Activated T-helper 1 cell treated with anti-CD3 and anti-CD28 coated beads, Interleukin-12 subunit alpha, Interleukin-12 subunit beta, Interleukin-2, Interleukin-4 antibody, amounts not matched to agents 30 ng/mL and 10 ng/mL and 1 ng/mL, durations not matched to agents 14 hours and 24 hours and 36 hours (primary cell): ENCODE measurements at regions of chr1 and their contacts with region 1.

Region 1: DNA sequence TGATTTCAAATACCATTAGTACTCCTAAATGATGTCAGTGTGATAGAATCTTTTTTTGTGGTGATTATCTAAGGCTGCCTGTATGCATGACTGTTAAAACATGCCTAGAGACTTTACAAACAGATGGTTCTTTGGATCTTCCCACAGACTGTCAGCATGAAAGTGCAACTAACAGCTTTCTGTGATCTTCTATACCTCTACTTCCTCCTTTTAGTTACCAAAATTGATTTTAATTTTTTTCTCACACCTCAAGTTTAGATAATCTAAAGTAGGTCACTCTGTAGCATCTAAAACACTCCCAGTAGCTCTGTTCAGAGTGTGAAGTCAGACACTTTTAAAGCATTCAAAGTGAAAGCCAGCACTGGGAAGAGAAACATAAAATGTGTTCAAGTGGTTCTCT is 534.5 kb downstream of the PTPRC start:
- DNase-seq: peak; percentile 35
- H3K4me3 Mint-ChIP-seq: peak overlapping the region; percentile 31
- H3K27ac Mint-ChIP-seq: peak overlapping the region; percentile 73
- H3K4me1 Mint-ChIP-seq: peaks cover 60% of the 10 kb centered on the region
- H3K27me3 Mint-ChIP-seq: peaks cover 2% of the 10 kb centered on the region

Region 2: DNA sequence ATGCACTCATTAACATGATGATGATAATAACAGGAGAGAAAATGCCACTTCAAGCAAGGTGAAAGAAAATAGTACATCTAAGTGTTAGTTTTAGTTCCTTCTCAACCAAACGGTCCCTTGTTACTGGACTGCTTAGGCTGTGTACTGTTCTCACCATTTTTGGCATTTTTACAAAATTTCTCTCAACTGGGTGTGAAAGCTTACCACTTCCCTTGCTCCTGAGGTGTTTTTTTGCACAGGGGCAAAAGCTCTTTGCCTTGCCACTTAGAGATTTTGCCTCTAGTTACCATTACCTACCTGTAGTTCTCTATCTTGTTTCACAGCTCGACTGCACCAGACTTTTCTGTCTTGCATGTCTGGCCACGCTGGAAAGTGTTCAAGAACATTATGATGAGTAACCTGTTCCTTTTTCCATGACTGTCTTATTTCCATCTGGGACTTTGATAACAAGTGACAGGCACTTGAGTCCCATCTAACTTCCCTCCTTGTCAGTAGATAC is 1005.9 kb before region 1 on chr1:
- intact Hi-C with region 1: loop called (anchors 5 kb)
- DNase-seq: peak; percentile 20
- H3K4me3 Mint-ChIP-seq: peak overlapping the region; percentile 56
- H3K27ac Mint-ChIP-seq: peak overlapping the region; percentile 91
- H3K4me1 Mint-ChIP-seq: peaks cover 78% of the 10 kb centered on the region
- H3K27me3 Mint-ChIP-seq: no peaks in the 10 kb centered on the region

Region 3: GRCh38 chr1:198880818-198881597 is 292.3 kb before region 1 on chr1:
- intact Hi-C with region 1: loop called (anchors 2 kb)
- DNase-seq: no peak
- H3K4me3 Mint-ChIP-seq: no peak overlapping the region
- H3K27ac Mint-ChIP-seq: peak overlapping the region; percentile 71
- H3K4me1 Mint-ChIP-seq: peaks cover 59% of the 10 kb centered on the region
- H3K27me3 Mint-ChIP-seq: no peaks in the 10 kb centered on the region

Region 4: DNA sequence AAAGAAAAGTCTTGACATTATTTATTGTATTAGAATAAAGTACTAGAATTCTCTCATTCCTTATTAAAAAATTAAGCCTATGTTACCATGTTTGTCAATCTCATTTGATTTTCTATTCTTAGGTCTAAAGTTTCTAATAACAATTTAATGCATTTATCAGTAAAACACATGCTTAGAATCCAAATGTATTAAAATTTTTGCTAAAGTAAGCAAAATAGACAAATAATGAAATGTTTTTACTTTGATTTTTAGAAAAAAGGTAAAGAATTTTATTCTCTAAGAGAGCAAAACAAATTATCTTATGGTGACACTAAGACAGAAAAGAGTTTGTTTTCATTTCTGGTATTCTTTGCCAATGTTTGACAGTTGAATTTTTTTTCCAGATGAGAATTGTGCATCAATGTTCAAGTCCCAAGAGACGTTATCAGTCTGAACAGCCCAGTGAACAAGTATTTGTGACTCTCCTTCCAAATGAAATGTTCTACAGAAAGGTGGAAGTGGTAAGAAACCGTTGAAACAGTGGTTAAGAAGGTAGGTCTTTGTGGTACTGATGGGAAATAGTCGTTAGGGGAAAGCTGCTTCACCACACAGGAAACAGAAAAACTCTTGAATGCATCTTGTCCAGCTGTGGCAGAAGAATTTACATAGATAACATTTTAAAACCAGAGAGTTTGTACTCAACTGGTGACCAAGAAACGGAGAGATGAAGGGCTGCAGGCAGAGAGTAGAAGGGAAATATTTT is 132.0 kb before region 1 on chr1:
- intact Hi-C with region 1: loop called (anchors 1 kb)
- DNase-seq: peak; percentile 66
- H3K4me3 Mint-ChIP-seq: peak overlapping the region; percentile 35
- H3K27ac Mint-ChIP-seq: peak overlapping the region; percentile 83
- H3K4me1 Mint-ChIP-seq: peaks cover 54% of the 10 kb centered on the region
- H3K27me3 Mint-ChIP-seq: no peaks in the 10 kb centered on the region

Region 5: GRCh38 chr1:199067483-199067882 is 105.9 kb before region 1 on chr1:
- intact Hi-C with region 1: no loop called
- DNase-seq: no peak
- H3K4me3 Mint-ChIP-seq: peak overlapping the region; percentile 38
- H3K27ac Mint-ChIP-seq: peak overlapping the region; percentile 21
- H3K4me1 Mint-ChIP-seq: peaks cover 50% of the 10 kb centered on the region
- H3K27me3 Mint-ChIP-seq: no peaks in the 10 kb centered on the region

Region 6: DNA sequence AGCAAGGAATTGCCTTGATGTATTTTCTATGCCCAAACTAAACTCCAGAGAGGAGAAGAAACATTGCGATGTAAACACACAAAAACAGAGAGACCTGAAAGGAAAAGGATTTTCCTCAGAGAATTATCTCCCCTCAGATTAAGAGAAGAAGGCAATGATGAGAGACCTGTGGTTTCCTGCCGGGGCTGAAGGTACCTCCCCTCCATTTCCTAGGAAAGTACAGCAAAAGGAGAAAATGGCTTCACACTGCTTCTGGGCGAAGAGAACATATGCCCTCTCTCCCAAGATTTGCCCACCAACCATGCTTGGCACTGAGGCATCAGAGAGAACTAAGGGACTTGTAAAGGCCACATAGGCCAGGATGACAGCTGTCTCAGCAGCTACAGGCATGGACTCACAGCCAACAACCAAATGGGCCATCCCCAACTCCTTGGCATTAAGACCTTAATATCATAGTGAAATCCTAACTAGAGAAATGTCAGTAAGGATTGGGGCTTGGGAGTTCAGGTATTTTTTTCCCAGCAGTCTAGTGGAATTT is 11.5 kb before region 1 on chr1:
- intact Hi-C with region 1: loop called (anchors 1 kb)
- DNase-seq: no peak
- H3K4me3 Mint-ChIP-seq: peak overlapping the region; percentile 16
- H3K27ac Mint-ChIP-seq: no peak overlapping the region
- H3K4me1 Mint-ChIP-seq: peaks cover 43% of the 10 kb centered on the region
- H3K27me3 Mint-ChIP-seq: no peaks in the 10 kb centered on the region

Region 7: GRCh38 chr1:199279872-199280645 is 106.7 kb after region 1 on chr1:
- intact Hi-C with region 1: loop called (anchors 1 kb)
- DNase-seq: no peak
- H3K4me3 Mint-ChIP-seq: no peak overlapping the region
- H3K27ac Mint-ChIP-seq: no peak overlapping the region
- H3K4me1 Mint-ChIP-seq: peaks cover 13% of the 10 kb centered on the region
- H3K27me3 Mint-ChIP-seq: peaks cover 1% of the 10 kb centered on the region